HCT116 (cell line): ENCODE measurements at regions of chr4 and their contacts with region 1.

Region 1: GRCh38 chr4:182806259-182807252 is 110.6 kb downstream of the DCTD start:
- DNase-seq: peak; percentile 21
- ATAC-seq: peak; percentile 91
- H3K4me3 ChIP-seq: peak overlapping the region; percentile 23 to 39; a peak in 3 of 4 replicates
- H3K27ac ChIP-seq: no peak overlapping the region
- H3K4me1 ChIP-seq: peaks cover 4 to 20% of the 10 kb centered on the region in 2 experiments; a peak in 2 of 4 replicates
- H3K27me3 ChIP-seq: no peaks in the 10 kb centered on the region
- CTCF ChIP-seq: peak; percentile 83 to 88 (median 85)
- POLR2A ChIP-seq: no peak
- RAD21 ChIP-seq: peak; percentile 92

Region 2: DNA sequence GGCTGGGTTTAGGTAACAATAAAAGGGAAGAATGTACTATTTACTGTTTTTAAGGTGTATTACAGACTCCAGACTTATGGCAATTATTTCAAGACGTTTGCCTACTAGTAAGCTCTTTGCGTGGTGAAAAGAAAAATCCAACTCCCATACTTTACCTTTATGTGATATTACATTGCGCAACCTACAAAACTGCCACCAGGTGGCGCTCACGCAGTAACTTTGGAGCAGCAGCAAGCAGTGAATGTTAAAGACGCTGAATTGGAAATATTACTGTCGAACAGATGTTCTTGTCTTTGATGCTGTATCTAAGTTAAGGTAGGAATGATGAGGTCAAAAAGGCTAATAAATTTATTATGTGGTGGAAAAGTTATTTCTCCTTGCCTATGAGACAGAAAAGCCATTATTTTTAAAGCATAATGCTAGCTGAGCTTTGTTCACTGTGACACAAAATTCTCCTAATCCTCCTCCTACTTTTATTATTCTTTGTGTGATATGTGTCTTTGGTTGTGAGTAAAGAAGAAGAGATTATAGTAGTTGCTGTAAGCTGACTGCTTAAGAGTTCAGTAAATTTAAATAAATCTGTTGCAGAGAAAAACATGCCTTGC is 1663.2 kb before region 1 on chr4:
- CTCF ChIA-PET with region 1: no interaction called
- POLR2A ChIA-PET with region 1: no interaction called
- RAD21 ChIA-PET with region 1: no interaction called
- intact Hi-C with region 1: loop called (anchors 1 kb)
- DNase-seq: peak; percentile 56
- ATAC-seq: peak; percentile 87
- H3K4me3 ChIP-seq: no peak overlapping the region
- H3K27ac ChIP-seq: no peak overlapping the region
- H3K4me1 ChIP-seq: no peaks in the 10 kb centered on the region
- H3K27me3 ChIP-seq: peaks cover 8% of the 10 kb centered on the region; the same call in 1 of the 2 replicates
- CTCF ChIP-seq: peak; percentile 69 to 91 (median 70)
- POLR2A ChIP-seq: no peak
- RAD21 ChIP-seq: peak; percentile 87

Region 3: DNA sequence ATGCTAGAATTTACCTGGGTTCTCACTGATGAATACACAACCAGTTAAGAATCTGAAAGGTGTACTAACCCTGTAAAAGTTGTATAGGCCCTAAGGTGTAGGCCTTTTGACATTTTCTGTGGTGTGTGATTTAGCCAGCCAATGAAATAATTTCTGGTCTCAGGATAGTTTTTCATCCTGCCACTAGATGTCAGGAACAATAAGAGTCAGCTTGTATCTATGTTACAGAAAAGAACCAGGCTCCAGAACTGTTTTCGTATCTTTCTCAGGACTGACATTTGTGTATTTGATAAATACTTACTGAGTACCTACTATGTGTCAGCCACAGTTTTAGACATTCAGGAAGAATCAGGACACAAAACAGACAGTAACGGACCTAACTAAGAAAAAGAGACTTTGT is 1237.0 kb before region 1 on chr4:
- CTCF ChIA-PET with region 1: no interaction called
- POLR2A ChIA-PET with region 1: no interaction called
- RAD21 ChIA-PET with region 1: no interaction called
- intact Hi-C with region 1: loop called (anchors 1 kb)
- DNase-seq: peak; percentile 19
- ATAC-seq: peak; percentile 84
- H3K4me3 ChIP-seq: no peak overlapping the region
- H3K27ac ChIP-seq: no peak overlapping the region
- H3K4me1 ChIP-seq: no peaks in the 10 kb centered on the region
- H3K27me3 ChIP-seq: no peaks in the 10 kb centered on the region
- CTCF ChIP-seq: peak; percentile 25 to 55 (median 45); a peak in 5 of 6 replicates
- POLR2A ChIP-seq: no peak
- RAD21 ChIP-seq: peak; percentile 44

Region 4: GRCh38 chr4:182507805-182508204 is 298.8 kb before region 1 on chr4:
- CTCF ChIA-PET with region 1: no interaction called
- POLR2A ChIA-PET with region 1: no interaction called
- RAD21 ChIA-PET with region 1: no interaction called
- intact Hi-C with region 1: no loop called
- DNase-seq: no peak
- ATAC-seq: no peak
- H3K4me3 ChIP-seq: no peak overlapping the region
- H3K27ac ChIP-seq: no peak overlapping the region
- H3K4me1 ChIP-seq: no peaks in the 10 kb centered on the region
- H3K27me3 ChIP-seq: peaks cover 64% of the 10 kb centered on the region
- CTCF ChIP-seq: no peak
- POLR2A ChIP-seq: no peak
- RAD21 ChIP-seq: no peak

Region 5: DNA sequence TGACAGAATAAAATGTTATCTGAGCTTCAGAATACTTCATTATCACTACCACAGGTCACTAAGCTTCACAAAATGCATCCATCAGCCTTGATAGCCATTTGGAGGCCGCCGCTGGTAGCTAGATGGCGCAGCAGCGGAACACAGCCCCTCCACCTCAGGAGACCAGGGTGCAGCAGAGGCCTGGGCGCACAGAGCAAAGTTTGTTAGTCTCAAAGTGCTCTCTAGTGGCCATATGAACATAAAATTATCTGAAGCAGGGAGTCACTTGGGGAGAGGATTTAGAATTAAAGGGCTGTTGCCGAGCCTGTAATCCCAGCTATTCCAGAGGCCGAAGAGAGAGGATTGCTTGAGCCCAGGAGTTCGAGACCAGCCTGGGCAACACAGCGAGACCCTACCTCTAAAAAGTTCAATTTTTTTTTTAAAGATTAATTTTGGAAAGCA is 118.8 kb after region 1 on chr4:
- CTCF ChIA-PET with region 1: interaction called, 4 read pairs
- POLR2A ChIA-PET with region 1: no interaction called
- RAD21 ChIA-PET with region 1: no interaction called
- intact Hi-C with region 1: loop called (anchors 2 kb)
- DNase-seq: peak; percentile 91
- ATAC-seq: peak; percentile 99
- H3K4me3 ChIP-seq: no peak overlapping the region
- H3K27ac ChIP-seq: no peak overlapping the region
- H3K4me1 ChIP-seq: peaks cover 0 to 5% of the 10 kb centered on the region in 2 experiments; a peak in 1 of 4 replicates
- H3K27me3 ChIP-seq: no peaks in the 10 kb centered on the region
- CTCF ChIP-seq: peak; percentile 85 to 99 (median 89)
- POLR2A ChIP-seq: no peak
- RAD21 ChIP-seq: peak; percentile 96